ENCODE measurements at regions of chr3 and their contacts with region 1.

Region 1: GRCh38 chr3:105366326-105367062 is at the start of gene ALCAM:
- DNase-seq: peak; percentile 99
- H3K4me3 ChIP-seq: peak within 1 kb of the TSS; percentile 49 to 83 (median 80)
- H3K27ac ChIP-seq: peak within 1 kb of the TSS; percentile 96
- H3K4me1 ChIP-seq: peaks cover 46% of the 10 kb centered on the region
- H3K27me3 ChIP-seq: no peaks in the 10 kb centered on the region
- CTCF ChIP-seq: peak; percentile 75 to 78
- POLR2A ChIP-seq: no peak
- total RNA-seq, gene ALCAM: 118 and 138 TPM in 2 replicates

Region 2: GRCh38 chr3:104102386-104102785 is 1264.1 kb before region 1 on chr3:
- CTCF ChIA-PET with region 1: interaction called, 13 read pairs
- POLR2A ChIA-PET with region 1: no interaction called
- dilution Hi-C with region 1: no loop called
- intact Hi-C with region 1: loop called (anchors 1 kb)
- DNase-seq: peak; percentile 60
- H3K4me3 ChIP-seq: no peak overlapping the region
- H3K27ac ChIP-seq: no peak overlapping the region
- H3K4me1 ChIP-seq: no peaks in the 10 kb centered on the region
- H3K27me3 ChIP-seq: peaks cover 2 to 9% of the 10 kb centered on the region in 2 experiments
- CTCF ChIP-seq: peak; percentile 58 to 68
- POLR2A ChIP-seq: no peak

Region 3: DNA sequence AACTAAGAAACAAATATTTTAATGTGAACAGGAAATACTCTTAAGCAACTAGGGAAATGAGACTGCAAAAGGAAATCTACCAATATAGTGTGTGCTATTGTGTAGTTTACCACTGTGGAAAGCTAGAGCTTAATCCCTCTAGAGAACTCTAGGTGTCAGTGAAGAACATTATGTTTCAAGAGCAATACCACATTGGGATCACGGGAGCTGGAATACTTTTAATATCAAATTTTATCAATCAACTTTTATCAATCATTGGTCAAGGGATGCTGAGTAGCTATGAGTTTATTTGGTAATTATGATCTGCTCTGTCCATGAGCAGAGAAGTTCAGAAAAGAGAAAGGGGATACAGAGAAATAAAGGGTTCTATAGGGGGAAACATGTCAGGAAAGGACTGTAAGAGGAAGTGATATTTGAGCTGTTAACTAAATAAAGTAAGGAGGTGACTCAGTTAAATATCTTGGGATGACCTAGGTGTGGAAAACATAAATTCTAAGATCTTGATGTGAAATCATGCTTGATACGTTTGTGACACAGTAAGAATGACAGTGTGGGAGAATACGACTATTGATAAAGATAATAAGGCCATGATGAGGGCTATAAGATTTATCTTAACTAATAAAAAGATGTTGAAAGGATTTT is 762.0 kb before region 1 on chr3:
- CTCF ChIA-PET with region 1: interaction called, 84 read pairs
- POLR2A ChIA-PET with region 1: no interaction called
- dilution Hi-C with region 1: no loop called
- intact Hi-C with region 1: loop called (anchors 1 kb)
- DNase-seq: peak; percentile 73
- H3K4me3 ChIP-seq: no peak overlapping the region
- H3K27ac ChIP-seq: peak overlapping the region; percentile 25
- H3K4me1 ChIP-seq: peaks cover 10% of the 10 kb centered on the region
- H3K27me3 ChIP-seq: no peaks in the 10 kb centered on the region
- CTCF ChIP-seq: peak; percentile 25 to 35
- POLR2A ChIP-seq: no peak

Region 4: DNA sequence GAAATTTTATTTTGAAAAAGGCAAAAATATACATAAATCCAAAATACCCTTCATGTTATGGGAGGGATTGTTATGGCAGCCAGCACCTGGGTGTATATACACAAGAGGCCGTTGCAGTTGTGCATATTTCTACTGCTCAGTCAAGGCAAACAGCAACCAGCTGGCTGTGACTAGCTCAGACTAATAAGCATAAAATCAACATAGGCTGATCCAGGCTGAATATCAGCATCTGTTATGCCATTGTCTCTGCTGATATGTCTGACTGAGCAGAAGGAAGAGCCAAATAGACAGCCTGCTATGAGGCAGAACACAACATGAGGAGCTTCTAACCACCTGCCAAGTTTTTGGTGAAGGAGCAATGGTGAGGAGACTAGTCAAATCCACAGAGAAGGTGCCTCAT is 457.3 kb before region 1 on chr3:
- CTCF ChIA-PET with region 1: interaction called, 5 read pairs
- POLR2A ChIA-PET with region 1: interaction called, 7 read pairs
- dilution Hi-C with region 1: no loop called
- intact Hi-C with region 1: loop called (anchors 1 kb)
- DNase-seq: peak; percentile 85
- H3K4me3 ChIP-seq: peak overlapping the region in 1 of 3 experiments; percentile 52
- H3K27ac ChIP-seq: peak overlapping the region; percentile 99
- H3K4me1 ChIP-seq: peaks cover 29% of the 10 kb centered on the region
- H3K27me3 ChIP-seq: no peaks in the 10 kb centered on the region
- CTCF ChIP-seq: no peak
- POLR2A ChIP-seq: peak; percentile 31

Region 5: GRCh38 chr3:105166893-105167292 is 199.6 kb before region 1 on chr3:
- CTCF ChIA-PET with region 1: no interaction called
- POLR2A ChIA-PET with region 1: no interaction called
- dilution Hi-C with region 1: no loop called
- intact Hi-C with region 1: no loop called
- DNase-seq: no peak
- H3K4me3 ChIP-seq: no peak overlapping the region
- H3K27ac ChIP-seq: no peak overlapping the region
- H3K4me1 ChIP-seq: no peaks in the 10 kb centered on the region
- H3K27me3 ChIP-seq: no peaks in the 10 kb centered on the region
- CTCF ChIP-seq: no peak
- POLR2A ChIP-seq: no peak

Region 6: GRCh38 chr3:105253225-105253624 is 113.3 kb before region 1 on chr3:
- CTCF ChIA-PET with region 1: no interaction called
- POLR2A ChIA-PET with region 1: interaction called, 3 read pairs
- dilution Hi-C with region 1: no loop called
- intact Hi-C with region 1: loop called (anchors 1 kb)
- DNase-seq: peak; percentile 92
- H3K4me3 ChIP-seq: no peak overlapping the region
- H3K27ac ChIP-seq: no peak overlapping the region
- H3K4me1 ChIP-seq: peaks cover 10% of the 10 kb centered on the region
- H3K27me3 ChIP-seq: no peaks in the 10 kb centered on the region
- CTCF ChIP-seq: no peak
- POLR2A ChIP-seq: no peak

Region 7: GRCh38 chr3:105868742-105869530 is 502.4 kb after region 1 on chr3 and contains the start of gene CBLB:
- CTCF ChIA-PET with region 1: no interaction called
- POLR2A ChIA-PET with region 1: no interaction called
- dilution Hi-C with region 1: no loop called
- intact Hi-C with region 1: loop called (anchors 10 kb)
- DNase-seq: peak; percentile 96
- H3K4me3 ChIP-seq: peak within 1 kb of the TSS; percentile 84 to 97 (median 94)
- H3K27ac ChIP-seq: peak within 1 kb of the TSS; percentile 64
- H3K4me1 ChIP-seq: peaks cover 34% of the 10 kb centered on the region
- H3K27me3 ChIP-seq: no peaks in the 10 kb centered on the region
- CTCF ChIP-seq: no peak
- POLR2A ChIP-seq: no peak
- total RNA-seq, gene CBLB: 39.6 and 39.8 TPM in 2 replicates